ENCODE measurements at regions of chr1 and their contacts with region 1.

Region 1: DNA sequence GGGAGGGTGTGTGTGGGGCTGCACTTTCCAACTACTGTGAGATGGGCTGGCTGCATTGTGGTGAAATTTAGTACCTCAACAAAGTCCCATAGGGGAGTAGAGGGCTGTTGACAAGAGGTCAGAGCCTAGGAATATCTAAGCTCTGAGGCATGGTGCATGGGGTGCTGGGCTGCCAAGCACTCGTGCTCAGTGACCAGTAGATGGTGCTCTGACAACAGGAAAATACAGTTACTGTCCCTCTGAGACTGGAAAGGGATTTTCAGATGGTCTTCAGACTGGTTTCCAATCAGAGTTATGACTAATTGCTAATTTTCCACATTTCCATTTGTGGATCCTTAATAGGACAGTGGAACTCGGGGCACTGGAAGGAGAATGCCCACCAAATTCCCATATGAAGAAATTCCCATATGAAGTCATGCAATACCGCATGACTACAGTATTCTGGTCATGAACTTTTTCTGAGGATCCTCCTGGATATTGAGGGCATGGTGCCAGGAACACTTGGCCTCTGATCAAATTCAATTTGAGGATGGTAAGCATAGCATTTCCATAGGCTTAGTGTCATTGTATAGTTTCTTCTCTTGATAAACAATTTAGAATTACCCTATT is 4.1 kb upstream of the CACNA1E start:
- DNase-seq: peak in 5 of 14 experiments; percentile 7 to 63 (median 48)
- ATAC-seq: peak; percentile 52
- H3K4me3 ChIP-seq: no peak overlapping the region
- H3K4me3 Mint-ChIP-seq: no peak overlapping the region
- H3K27ac ChIP-seq: no peak overlapping the region
- H3K27ac Mint-ChIP-seq: no peak overlapping the region
- H3K4me1 ChIP-seq: peaks cover 2% of the 10 kb centered on the region
- H3K4me1 Mint-ChIP-seq: no peaks in the 10 kb centered on the region
- H3K27me3 ChIP-seq: peaks cover 27 to 42% of the 10 kb centered on the region in 2 experiments
- H3K27me3 Mint-ChIP-seq: peaks cover 57% of the 10 kb centered on the region
- CTCF ChIP-seq: peak; percentile 60

Region 2: DNA sequence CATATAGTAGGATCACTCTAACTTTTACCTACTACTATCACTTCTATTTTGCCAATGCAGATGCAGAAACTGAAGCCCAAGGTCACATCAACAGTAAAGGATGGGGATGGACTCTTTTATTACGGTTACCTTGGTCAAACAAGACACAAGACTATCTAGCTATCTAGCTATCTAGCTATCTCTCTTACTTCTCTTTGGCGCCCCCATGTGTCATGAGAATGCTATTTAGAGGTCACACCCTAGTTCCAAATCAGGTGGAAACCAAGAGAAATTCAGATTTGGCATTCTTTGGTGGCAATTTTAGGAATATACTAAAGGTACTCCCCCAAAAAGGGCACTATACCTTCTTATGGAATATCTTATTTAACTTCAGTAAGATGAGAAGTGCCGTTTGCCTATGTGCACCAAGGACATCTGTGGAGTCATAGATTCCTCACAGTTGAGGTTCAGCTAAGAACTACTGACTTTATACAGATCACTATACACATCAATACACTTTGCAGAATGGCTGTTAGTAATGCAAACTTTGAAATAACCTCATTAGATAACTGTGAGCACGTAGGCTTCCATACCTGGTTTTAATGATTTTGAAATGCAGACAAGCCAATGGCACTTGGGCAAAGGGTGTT is 575.6 kb after region 1 on chr1:
- CTCF ChIA-PET with region 1: interaction called, 13 read pairs
- POLR2A ChIA-PET with region 1: no interaction called
- intact Hi-C with region 1: loop called in 1 of 2 experiments (anchors 1 kb)
- DNase-seq: peak; percentile 13 to 73 (median 48)
- ATAC-seq: peak; percentile 37
- H3K4me3 ChIP-seq: no peak overlapping the region
- H3K4me3 Mint-ChIP-seq: no peak overlapping the region
- H3K27ac ChIP-seq: no peak overlapping the region
- H3K27ac Mint-ChIP-seq: no peak overlapping the region
- H3K4me1 ChIP-seq: no peaks in the 10 kb centered on the region
- H3K4me1 Mint-ChIP-seq: no peaks in the 10 kb centered on the region
- H3K27me3 ChIP-seq: peaks cover 10 to 14% of the 10 kb centered on the region in 2 experiments
- H3K27me3 Mint-ChIP-seq: peaks cover 30% of the 10 kb centered on the region
- CTCF ChIP-seq: peak; percentile 73

Region 3: GRCh38 chr1:182397771-182398393 is 918.6 kb after region 1 on chr1:
- CTCF ChIA-PET with region 1: interaction called, 3 read pairs
- POLR2A ChIA-PET with region 1: no interaction called
- intact Hi-C with region 1: loop called in 1 of 2 experiments (anchors 2 kb)
- DNase-seq: no peak
- ATAC-seq: no peak
- H3K4me3 ChIP-seq: no peak overlapping the region
- H3K4me3 Mint-ChIP-seq: no peak overlapping the region
- H3K27ac ChIP-seq: no peak overlapping the region
- H3K27ac Mint-ChIP-seq: no peak overlapping the region
- H3K4me1 ChIP-seq: peaks cover 3% of the 10 kb centered on the region
- H3K4me1 Mint-ChIP-seq: peaks cover 10% of the 10 kb centered on the region
- H3K27me3 ChIP-seq: no peaks in the 10 kb centered on the region
- H3K27me3 Mint-ChIP-seq: peaks cover 14% of the 10 kb centered on the region
- CTCF ChIP-seq: no peak

Measured in CD4-positive, alpha-beta T cell (primary cell).